ENCODE measurements at regions of chr14 and their contacts with region 1.

Region 1: DNA sequence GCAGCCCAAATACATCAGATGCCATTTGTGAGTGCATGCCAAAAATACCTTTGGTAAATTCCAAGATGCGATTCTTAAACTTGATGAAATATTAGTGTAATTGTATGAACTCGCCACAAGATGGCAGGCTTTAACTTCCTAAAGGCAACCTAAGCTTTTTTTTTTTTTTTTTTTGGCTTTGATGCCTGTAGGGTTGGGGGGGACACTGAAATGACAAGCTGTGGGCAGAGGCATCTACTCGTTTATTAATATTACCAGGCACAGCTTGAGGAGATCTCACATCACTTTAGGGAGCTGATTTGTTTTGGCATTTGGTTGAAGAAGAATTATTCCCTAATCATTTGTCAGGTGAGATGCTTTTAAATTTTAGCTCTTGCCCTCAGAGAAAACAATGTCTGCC is 126.7 kb upstream of the CCDC196 start:
- DNase-seq: peak; percentile 48
- H3K4me3 ChIP-seq: no peak overlapping the region
- H3K27ac ChIP-seq: no peak overlapping the region
- H3K4me1 ChIP-seq: no peaks in the 10 kb centered on the region
- H3K27me3 ChIP-seq: peaks cover 0 to 16% of the 10 kb centered on the region in 2 experiments
- CTCF ChIP-seq: peak; percentile 32 to 37
- POLR2A ChIP-seq: no peak

Region 2: GRCh38 chr14:66403183-66403582 is 43.7 kb after region 1 on chr14:
- CTCF ChIA-PET with region 1: interaction called, 104 read pairs
- POLR2A ChIA-PET with region 1: no interaction called
- dilution Hi-C with region 1: no loop called
- intact Hi-C with region 1: loop called (anchors 1 kb)
- DNase-seq: peak; percentile 27
- H3K4me3 ChIP-seq: no peak overlapping the region
- H3K27ac ChIP-seq: no peak overlapping the region
- H3K4me1 ChIP-seq: peaks cover 11% of the 10 kb centered on the region
- H3K27me3 ChIP-seq: no peaks in the 10 kb centered on the region
- CTCF ChIP-seq: peak; percentile 9 to 31
- POLR2A ChIP-seq: no peak

Region 3: DNA sequence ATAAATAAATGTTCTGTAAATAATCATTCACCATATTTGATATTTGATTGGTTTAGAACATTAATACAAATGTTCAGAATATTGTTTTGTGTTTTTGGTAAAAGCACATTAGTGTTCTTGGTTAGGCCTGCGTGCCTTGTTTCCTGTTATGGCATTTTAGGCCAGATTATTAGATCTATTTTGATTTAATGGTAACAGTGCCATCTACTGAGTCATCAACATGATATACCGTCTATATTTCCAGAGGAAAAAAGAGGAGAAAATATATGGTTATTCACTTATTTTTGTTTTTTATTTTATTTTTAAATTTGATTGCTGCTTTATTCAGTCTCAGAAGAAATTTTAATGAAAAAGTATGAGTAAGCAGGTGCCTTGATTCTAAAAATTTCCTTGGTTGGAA is 208.7 kb after region 1 on chr14:
- CTCF ChIA-PET with region 1: interaction called, 4 read pairs
- POLR2A ChIA-PET with region 1: no interaction called
- dilution Hi-C with region 1: no loop called
- intact Hi-C with region 1: loop called (anchors 5 kb)
- DNase-seq: peak; percentile 31
- H3K4me3 ChIP-seq: no peak overlapping the region
- H3K27ac ChIP-seq: no peak overlapping the region
- H3K4me1 ChIP-seq: peaks cover 3% of the 10 kb centered on the region
- H3K27me3 ChIP-seq: no peaks in the 10 kb centered on the region
- CTCF ChIP-seq: no peak
- POLR2A ChIP-seq: no peak

Region 4: DNA sequence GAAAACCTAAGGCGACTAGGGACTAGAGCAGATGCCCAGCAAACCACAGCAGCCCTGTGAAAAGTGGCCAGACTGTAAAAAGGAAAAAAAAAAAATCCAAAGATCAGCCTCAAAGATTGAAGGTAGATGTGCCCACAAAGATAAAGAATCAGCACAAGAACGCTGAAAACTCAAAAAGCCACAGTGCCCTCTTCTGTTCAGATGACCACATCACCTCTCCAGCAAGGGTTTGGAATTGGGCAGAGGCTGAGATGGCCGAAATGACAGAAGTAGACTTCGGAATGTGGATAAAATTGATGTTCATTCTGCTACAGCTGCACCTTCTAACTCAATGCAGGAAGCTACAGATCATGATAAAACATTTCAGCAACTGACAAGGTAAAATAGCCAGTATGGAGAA is 302.9 kb after region 1 on chr14:
- CTCF ChIA-PET with region 1: interaction called, 14 read pairs
- POLR2A ChIA-PET with region 1: no interaction called
- dilution Hi-C with region 1: no loop called
- intact Hi-C with region 1: loop called (anchors 1 kb)
- DNase-seq: peak; percentile 41
- H3K4me3 ChIP-seq: no peak overlapping the region
- H3K27ac ChIP-seq: no peak overlapping the region
- H3K4me1 ChIP-seq: no peaks in the 10 kb centered on the region
- H3K27me3 ChIP-seq: no peaks in the 10 kb centered on the region
- CTCF ChIP-seq: peak; percentile 64 to 66
- POLR2A ChIP-seq: no peak

Region 5: DNA sequence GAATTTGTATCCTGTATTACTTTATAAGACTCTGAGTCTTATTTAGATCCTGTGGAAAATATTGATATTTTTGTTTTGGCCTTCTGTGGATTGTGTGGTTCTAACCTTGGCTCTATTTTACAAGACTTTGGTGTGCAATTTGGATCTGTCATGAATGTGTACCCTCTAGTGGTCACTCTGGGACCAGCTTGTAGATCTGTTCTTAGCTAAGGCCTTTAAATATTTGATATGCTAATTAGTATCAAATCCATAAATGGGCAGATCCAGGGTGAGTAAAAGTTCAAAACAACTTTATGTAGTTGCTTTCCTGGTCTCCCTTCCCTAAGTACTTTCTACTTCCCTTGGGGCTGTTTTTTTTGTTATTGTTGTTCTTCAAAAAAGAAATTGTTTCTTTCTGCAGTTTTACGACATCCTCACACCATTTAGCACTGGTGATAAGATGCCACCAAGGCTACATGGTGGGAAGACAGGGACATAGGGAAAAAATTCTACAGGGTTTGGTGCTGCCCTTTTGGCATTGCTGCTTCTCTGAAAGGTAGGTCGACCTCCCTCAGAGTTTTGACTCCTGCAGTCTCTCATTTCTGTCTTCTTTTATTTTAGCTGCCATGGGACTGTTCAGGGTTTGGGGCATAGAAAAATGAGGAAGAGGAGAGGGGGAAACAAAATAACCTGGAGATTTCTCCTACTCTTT is 387.0 kb after region 1 on chr14:
- CTCF ChIA-PET with region 1: interaction called, 8 read pairs
- POLR2A ChIA-PET with region 1: no interaction called
- dilution Hi-C with region 1: no loop called
- intact Hi-C with region 1: loop called (anchors 1 kb)
- DNase-seq: peak; percentile 70
- H3K4me3 ChIP-seq: no peak overlapping the region
- H3K27ac ChIP-seq: no peak overlapping the region
- H3K4me1 ChIP-seq: no peaks in the 10 kb centered on the region
- H3K27me3 ChIP-seq: no peaks in the 10 kb centered on the region
- CTCF ChIP-seq: peak; percentile 50 to 56
- POLR2A ChIP-seq: no peak

Measured in endothelial cell of umbilical vein (primary cell).